PC-9 (cell line): ENCODE measurements at regions of chr1 and their contacts with region 1.

Region 1: DNA sequence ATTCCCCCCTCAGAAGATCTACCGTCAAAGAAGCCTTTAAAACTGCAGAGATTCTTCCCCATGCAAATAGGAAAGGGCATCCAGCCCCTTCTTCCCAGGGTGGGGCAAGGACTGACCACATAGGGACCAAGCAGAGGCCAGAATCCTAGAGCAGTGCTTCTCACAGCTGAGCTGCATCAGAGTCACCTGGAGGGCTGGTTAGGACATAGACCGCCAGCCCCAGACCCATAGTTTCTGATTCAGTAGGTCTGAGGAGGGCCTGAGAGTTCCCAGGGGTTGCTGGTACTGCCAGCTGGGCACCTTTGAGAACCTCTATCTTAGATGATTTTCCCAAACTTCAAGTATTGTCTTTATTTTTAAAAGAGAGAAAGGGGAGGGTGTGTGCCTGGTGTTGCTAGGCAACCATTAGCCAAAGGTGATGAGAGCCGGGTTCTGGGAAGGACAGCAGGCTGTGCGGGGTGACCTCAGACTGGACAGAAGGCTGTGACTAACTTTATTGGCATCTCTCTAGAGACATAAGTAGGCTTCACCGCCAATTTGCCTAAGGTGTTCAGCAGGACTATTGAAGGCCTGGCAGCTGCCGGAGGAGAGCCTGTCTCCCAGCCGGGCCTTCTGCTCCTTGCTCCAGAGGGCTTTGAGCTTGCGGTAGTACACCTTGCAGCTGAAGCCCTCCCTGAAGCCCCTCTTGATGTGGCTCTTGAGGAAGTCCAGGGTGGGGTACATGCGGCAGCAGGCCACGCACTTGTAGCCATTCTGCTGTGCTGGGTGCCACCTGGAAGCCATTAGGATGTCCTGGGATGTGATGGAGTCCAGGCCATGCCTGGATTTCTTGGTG is 2.9 kb downstream of the SPATA46 start:
- DNase-seq: peak; percentile 87 to 94
- H3K4me3 ChIP-seq: no peak overlapping the region
- H3K27ac ChIP-seq: peak overlapping the region; percentile 20; the same call in 1 of the 2 replicates
- H3K4me1 ChIP-seq: peaks cover 28% of the 10 kb centered on the region
- H3K27me3 ChIP-seq: no peaks in the 10 kb centered on the region
- CTCF ChIP-seq: no peak

Region 2: GRCh38 chr1:162136760-162137159 is 237.0 kb before region 1 on chr1:
- CTCF ChIA-PET with region 1: no interaction called
- POLR2A ChIA-PET with region 1: interaction called, 4 read pairs
- intact Hi-C with region 1: loop called (anchors 5 kb)
- DNase-seq: peak; percentile 42 to 95
- H3K4me3 ChIP-seq: peak overlapping the region; percentile 30; the same call in 1 of the 2 replicates
- H3K27ac ChIP-seq: peak overlapping the region; percentile 96
- H3K4me1 ChIP-seq: peaks cover 91% of the 10 kb centered on the region
- H3K27me3 ChIP-seq: no peaks in the 10 kb centered on the region
- CTCF ChIP-seq: no peak

Region 3: GRCh38 chr1:162349635-162350330 is 24.0 kb before region 1 on chr1:
- CTCF ChIA-PET with region 1: interaction called, 4 read pairs
- POLR2A ChIA-PET with region 1: interaction called, 4 read pairs
- intact Hi-C with region 1: loop called (anchors 1 kb)
- DNase-seq: peak; percentile 43 to 95
- H3K4me3 ChIP-seq: peak overlapping the region; percentile 17; the same call in 1 of the 2 replicates
- H3K27ac ChIP-seq: peak overlapping the region; percentile 79
- H3K4me1 ChIP-seq: peaks cover 48% of the 10 kb centered on the region
- H3K27me3 ChIP-seq: no peaks in the 10 kb centered on the region
- CTCF ChIP-seq: no peak

Region 4: DNA sequence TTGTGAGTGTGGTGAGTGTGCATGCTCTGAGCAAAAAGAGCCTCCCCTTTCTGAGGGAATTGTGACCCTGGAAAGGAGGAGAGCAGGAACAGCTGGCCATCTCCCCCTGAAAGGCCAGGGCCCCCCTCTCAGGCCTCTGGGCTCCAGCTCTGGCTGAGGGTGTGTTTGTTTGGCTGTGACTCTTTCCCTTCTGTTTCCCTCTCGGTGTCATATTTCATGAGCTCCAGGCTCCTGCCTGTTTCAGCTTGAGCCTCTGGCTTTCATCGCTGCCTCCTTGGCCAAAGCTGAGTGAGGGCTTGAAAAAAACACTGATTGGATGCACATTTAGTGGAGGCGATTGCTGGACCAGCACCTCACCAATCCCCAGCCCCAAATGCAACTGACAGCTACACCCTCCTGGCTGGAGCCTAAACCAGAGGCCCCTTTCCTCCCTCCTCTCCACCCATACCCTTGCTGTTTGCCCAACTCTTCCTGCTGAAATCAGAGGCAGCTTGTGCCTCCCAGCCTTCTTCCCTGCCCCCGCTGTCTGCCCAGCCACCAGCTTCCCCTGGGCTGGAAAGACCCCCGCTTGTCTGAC is 322.6 kb after region 1 on chr1:
- CTCF ChIA-PET with region 1: no interaction called
- POLR2A ChIA-PET with region 1: interaction called, 12 read pairs
- intact Hi-C with region 1: no loop called
- DNase-seq: peak; percentile 65 to 81
- H3K4me3 ChIP-seq: peak overlapping the region; percentile 34; the same call in 1 of the 2 replicates
- H3K27ac ChIP-seq: peak overlapping the region; percentile 50
- H3K4me1 ChIP-seq: peaks cover 31% of the 10 kb centered on the region
- H3K27me3 ChIP-seq: no peaks in the 10 kb centered on the region
- CTCF ChIP-seq: no peak